ENCODE measurements at regions of chr11 and their contacts with region 1.

Region 1: GRCh38 chr11:18105802-18106574 is at the start of gene SAAL1:
- DNase-seq: peak; percentile 46 to 98
- H3K4me3 ChIP-seq: peak within 1 kb of the TSS; percentile 89 to 93 (median 91)
- H3K27ac ChIP-seq: peak within 1 kb of the TSS; percentile 75
- H3K4me1 ChIP-seq: 0 out of 7 replicates have a peak, but pooled peaks cover 0 to 2% (median 0%) of the 10 kb centered on the region in 4 experiments
- H3K27me3 ChIP-seq: peaks cover 0 to 3% (median 0%) of the 10 kb centered on the region in 4 experiments; a peak in 1 of 7 replicates
- CTCF ChIP-seq: peak; percentile 87 to 95 (median 93)
- EP300 ChIP-seq: peak in 1 of 2 experiments; percentile 52; a peak in 1 of 3 replicates
- POLR2A ChIP-seq: peak in 1 of 2 experiments; percentile 90; a peak in 2 of 3 replicates
- RAD21 ChIP-seq: peak; percentile 6 to 36; a peak in 1 of 4 replicates
- total RNA-seq, gene SAAL1: 46.6 and 48.3 TPM in 2 replicates

Region 2: DNA sequence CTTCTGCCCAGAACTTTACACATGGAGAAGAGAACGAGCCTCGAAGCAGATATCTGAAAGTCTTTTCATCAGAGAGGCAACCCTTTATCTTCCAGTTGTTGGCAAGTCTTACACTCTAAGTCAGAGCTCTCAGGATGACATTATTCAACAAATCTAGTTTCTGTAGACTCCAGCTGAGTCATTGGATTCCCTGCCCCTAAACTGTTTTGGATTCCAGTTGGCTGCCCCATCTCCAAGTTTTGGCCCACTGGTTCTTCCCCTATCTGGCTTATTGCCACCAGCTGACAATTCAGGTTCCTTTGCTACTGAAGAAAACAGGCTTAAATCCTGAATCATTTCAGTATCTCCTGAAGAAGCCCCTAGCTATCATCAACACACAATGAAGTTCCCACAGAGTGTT is 14.3 kb before region 1 on chr11:
- CTCF ChIA-PET with region 1: interaction called, 11 read pairs
- POLR2A ChIA-PET with region 1: interaction called, 3 read pairs
- DNase-seq: no peak
- H3K4me3 ChIP-seq: no peak overlapping the region
- H3K27ac ChIP-seq: no peak overlapping the region
- H3K4me1 ChIP-seq: no peaks in the 10 kb centered on the region
- H3K27me3 ChIP-seq: no peaks in the 10 kb centered on the region
- CTCF ChIP-seq: no peak
- EP300 ChIP-seq: no peak
- POLR2A ChIP-seq: no peak
- RAD21 ChIP-seq: no peak

Region 3: DNA sequence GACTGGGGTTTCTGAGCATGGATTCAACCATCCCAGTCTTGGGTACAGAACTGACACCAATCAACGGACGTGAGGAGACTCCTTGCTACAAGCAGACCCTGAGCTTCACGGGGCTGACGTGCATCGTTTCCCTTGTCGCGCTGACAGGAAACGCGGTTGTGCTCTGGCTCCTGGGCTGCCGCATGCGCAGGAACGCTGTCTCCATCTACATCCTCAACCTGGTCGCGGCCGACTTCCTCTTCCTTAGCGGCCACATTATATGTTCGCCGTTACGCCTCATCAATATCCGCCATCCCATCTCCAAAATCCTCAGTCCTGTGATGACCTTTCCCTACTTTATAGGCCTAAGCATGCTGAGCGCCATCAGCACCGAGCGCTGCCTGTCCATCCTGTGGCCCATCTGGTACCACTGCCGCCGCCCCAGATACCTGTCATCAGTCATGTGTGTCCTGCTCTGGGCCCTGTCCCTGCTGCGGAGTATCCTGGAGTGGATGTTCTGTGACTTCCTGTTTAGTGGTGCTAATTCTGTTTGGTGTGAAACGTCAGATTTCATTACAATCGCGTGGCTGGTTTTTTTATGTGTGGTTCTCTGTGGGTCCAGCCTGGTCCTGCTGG is 31.3 kb after region 1 on chr11:
- CTCF ChIA-PET with region 1: no interaction called
- POLR2A ChIA-PET with region 1: no interaction called
- DNase-seq: no peak
- H3K4me3 ChIP-seq: no peak overlapping the region
- H3K27ac ChIP-seq: no peak overlapping the region
- H3K4me1 ChIP-seq: peaks cover 0 to 9% (median 0%) of the 10 kb centered on the region in 4 experiments; a peak in 1 of 7 replicates
- H3K27me3 ChIP-seq: no peaks in the 10 kb centered on the region
- CTCF ChIP-seq: no peak
- EP300 ChIP-seq: no peak
- POLR2A ChIP-seq: no peak
- RAD21 ChIP-seq: no peak

Region 4: GRCh38 chr11:18332302-18332701 is 226.3 kb after region 1 on chr11:
- CTCF ChIA-PET with region 1: no interaction called
- POLR2A ChIA-PET with region 1: no interaction called
- DNase-seq: peak in 1 of 2 experiments; percentile 19
- H3K4me3 ChIP-seq: no peak overlapping the region
- H3K27ac ChIP-seq: no peak overlapping the region
- H3K4me1 ChIP-seq: 0 out of 7 replicates have a peak, but pooled peaks cover 0 to 3% (median 0%) of the 10 kb centered on the region in 4 experiments
- H3K27me3 ChIP-seq: no peaks in the 10 kb centered on the region
- CTCF ChIP-seq: no peak
- EP300 ChIP-seq: no peak
- POLR2A ChIP-seq: no peak
- RAD21 ChIP-seq: no peak

Measured in H1 (cell line).